CD4-positive, alpha-beta T cell (primary cell): ENCODE measurements at regions of chr1 and their contacts with region 1.

Region 1: GRCh38 chr1:203625628-203626019 is 1.0 kb upstream of the ATP2B4 start:
- DNase-seq: peak; percentile 45 to 91 (median 57)
- ATAC-seq: peak; percentile 66
- H3K4me3 ChIP-seq: peak overlapping the region; percentile 92
- H3K4me3 Mint-ChIP-seq: peak overlapping the region; percentile 77
- H3K27ac ChIP-seq: peak overlapping the region; percentile 72 to 86
- H3K27ac Mint-ChIP-seq: peak overlapping the region; percentile 81
- H3K4me1 ChIP-seq: peaks cover 49% of the 10 kb centered on the region
- H3K4me1 Mint-ChIP-seq: peaks cover 47% of the 10 kb centered on the region
- H3K27me3 ChIP-seq: no peaks in the 10 kb centered on the region
- H3K27me3 Mint-ChIP-seq: no peaks in the 10 kb centered on the region
- CTCF ChIP-seq: peak; percentile 74

Region 2: GRCh38 chr1:203326830-203327683 is 298.6 kb before region 1 on chr1:
- CTCF ChIA-PET with region 1: no interaction called
- POLR2A ChIA-PET with region 1: interaction called, 10 read pairs
- intact Hi-C with region 1: loop called in 1 of 2 experiments (anchors 5 kb)
- DNase-seq: peak; percentile 89 to 97 (median 94)
- ATAC-seq: peak; percentile 65
- H3K4me3 ChIP-seq: peak overlapping the region; percentile 66
- H3K4me3 Mint-ChIP-seq: peak overlapping the region; percentile 81
- H3K27ac ChIP-seq: peak overlapping the region; percentile 98 to 99
- H3K27ac Mint-ChIP-seq: peak overlapping the region; percentile 92
- H3K4me1 ChIP-seq: peaks cover 67% of the 10 kb centered on the region
- H3K4me1 Mint-ChIP-seq: peaks cover 72% of the 10 kb centered on the region
- H3K27me3 ChIP-seq: no peaks in the 10 kb centered on the region
- H3K27me3 Mint-ChIP-seq: no peaks in the 10 kb centered on the region
- CTCF ChIP-seq: no peak

Region 3: GRCh38 chr1:203600782-203601736 is 24.6 kb before region 1 on chr1:
- CTCF ChIA-PET with region 1: interaction called, 11 read pairs
- POLR2A ChIA-PET with region 1: interaction called, 10 read pairs
- intact Hi-C with region 1: no loop called
- DNase-seq: no peak
- ATAC-seq: no peak
- H3K4me3 ChIP-seq: no peak overlapping the region
- H3K4me3 Mint-ChIP-seq: no peak overlapping the region
- H3K27ac ChIP-seq: no peak overlapping the region
- H3K27ac Mint-ChIP-seq: no peak overlapping the region
- H3K4me1 ChIP-seq: peaks cover 20% of the 10 kb centered on the region
- H3K4me1 Mint-ChIP-seq: peaks cover 18% of the 10 kb centered on the region
- H3K27me3 ChIP-seq: no peaks in the 10 kb centered on the region
- H3K27me3 Mint-ChIP-seq: no peaks in the 10 kb centered on the region
- CTCF ChIP-seq: no peak

Region 4: DNA sequence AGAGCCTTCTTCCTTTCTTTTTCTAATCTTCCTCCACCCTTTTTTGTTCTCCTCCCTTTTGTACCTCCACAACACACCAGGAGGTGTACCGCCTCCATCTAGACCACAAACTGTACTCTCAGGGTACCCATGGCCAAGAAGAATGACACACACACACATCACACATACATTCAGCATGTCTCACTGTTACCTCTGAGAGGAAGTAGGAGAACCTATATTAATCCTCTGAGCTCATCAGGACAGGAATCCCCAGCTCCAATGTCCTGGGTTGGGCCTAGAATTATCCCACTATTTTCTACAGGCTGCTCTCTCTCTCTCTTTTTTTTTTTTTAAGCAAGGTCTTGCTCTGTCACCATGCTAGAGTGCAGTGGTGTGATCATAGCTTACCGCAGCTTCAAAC is 37.7 kb after region 1 on chr1:
- CTCF ChIA-PET with region 1: interaction called, 11 read pairs
- POLR2A ChIA-PET with region 1: interaction called, 7 read pairs
- intact Hi-C with region 1: no loop called
- DNase-seq: peak in 2 of 14 experiments; percentile 28 to 44
- ATAC-seq: peak; percentile 56
- H3K4me3 ChIP-seq: no peak overlapping the region
- H3K4me3 Mint-ChIP-seq: peak overlapping the region; percentile 46
- H3K27ac ChIP-seq: peak overlapping the region in 1 of 2 donors; percentile 10
- H3K27ac Mint-ChIP-seq: peak overlapping the region; percentile 58
- H3K4me1 ChIP-seq: peaks cover 74% of the 10 kb centered on the region
- H3K4me1 Mint-ChIP-seq: peaks cover 71% of the 10 kb centered on the region
- H3K27me3 ChIP-seq: no peaks in the 10 kb centered on the region
- H3K27me3 Mint-ChIP-seq: no peaks in the 10 kb centered on the region
- CTCF ChIP-seq: no peak

Region 5: GRCh38 chr1:203702130-203702577 is 76.5 kb after region 1 on chr1:
- CTCF ChIA-PET with region 1: interaction called, 86 read pairs
- POLR2A ChIA-PET with region 1: interaction called, 44 read pairs
- intact Hi-C with region 1: loop called (anchors 1 kb)
- DNase-seq: peak; percentile 42 to 83 (median 62)
- ATAC-seq: peak; percentile 74
- H3K4me3 ChIP-seq: no peak overlapping the region
- H3K4me3 Mint-ChIP-seq: no peak overlapping the region
- H3K27ac ChIP-seq: no peak overlapping the region
- H3K27ac Mint-ChIP-seq: peak overlapping the region; percentile 24
- H3K4me1 ChIP-seq: no peaks in the 10 kb centered on the region
- H3K4me1 Mint-ChIP-seq: peaks cover 15% of the 10 kb centered on the region
- H3K27me3 ChIP-seq: no peaks in the 10 kb centered on the region
- H3K27me3 Mint-ChIP-seq: no peaks in the 10 kb centered on the region
- CTCF ChIP-seq: peak; percentile 91

Region 6: DNA sequence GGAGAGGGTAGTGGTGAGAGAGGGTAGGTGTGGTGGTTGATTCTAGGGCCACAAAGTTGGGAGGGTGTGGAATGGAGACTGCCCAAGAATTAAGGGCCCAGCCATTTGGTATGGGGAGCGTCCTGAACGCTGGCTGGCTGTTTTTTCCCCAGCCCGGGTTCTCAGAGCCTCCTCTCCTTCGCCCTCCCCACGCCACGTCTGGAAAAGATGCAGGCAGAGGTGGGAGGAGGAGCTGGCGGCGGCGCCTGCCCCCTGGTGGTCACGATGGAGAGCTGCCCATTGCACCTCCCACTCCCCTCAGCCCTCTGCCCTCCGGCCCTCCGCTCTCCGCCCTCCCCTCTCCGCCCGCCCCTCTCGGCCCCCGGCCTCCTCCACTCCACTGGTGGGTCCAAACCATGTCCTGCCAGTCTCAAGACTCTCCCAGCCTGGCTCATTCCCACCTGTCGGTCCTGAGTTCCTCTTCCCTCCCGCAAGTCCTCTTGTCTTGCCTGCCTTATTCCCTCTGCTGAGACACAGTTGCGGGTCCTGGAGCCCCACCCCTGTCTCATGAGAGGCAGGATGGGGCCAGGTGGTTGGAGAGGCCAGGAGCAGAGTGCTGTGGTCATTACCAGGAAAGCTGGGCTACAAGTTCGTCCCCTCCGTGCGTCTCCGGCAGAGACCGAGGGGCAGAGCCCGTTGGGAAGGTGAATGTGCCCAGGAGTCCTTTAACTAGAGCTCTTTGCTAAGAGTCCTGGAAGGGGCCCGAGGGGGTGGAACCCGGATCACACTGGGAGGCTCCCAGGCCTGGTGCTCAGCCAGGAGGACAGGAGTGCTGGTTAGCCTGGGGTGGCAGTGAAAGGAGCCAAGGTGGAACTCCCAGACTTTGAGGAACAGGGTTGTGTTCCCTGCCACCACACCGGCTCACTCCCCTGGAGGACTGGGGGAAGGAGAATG is 503.6 kb after region 1 on chr1:
- CTCF ChIA-PET with region 1: no interaction called
- POLR2A ChIA-PET with region 1: interaction called, 6 read pairs
- intact Hi-C with region 1: loop called in 1 of 2 experiments (anchors 5 kb)
- DNase-seq: peak; percentile 27 to 85 (median 42)
- ATAC-seq: peak; percentile 87
- H3K4me3 ChIP-seq: no peak overlapping the region
- H3K4me3 Mint-ChIP-seq: no peak overlapping the region
- H3K27ac ChIP-seq: no peak overlapping the region
- H3K27ac Mint-ChIP-seq: no peak overlapping the region
- H3K4me1 ChIP-seq: peaks cover 11% of the 10 kb centered on the region
- H3K4me1 Mint-ChIP-seq: peaks cover 9% of the 10 kb centered on the region
- H3K27me3 ChIP-seq: no peaks in the 10 kb centered on the region
- H3K27me3 Mint-ChIP-seq: no peaks in the 10 kb centered on the region
- CTCF ChIP-seq: peak; percentile 87